PC-9 (cell line): ENCODE measurements at regions of chr7 and their contacts with region 1.

Region 1: GRCh38 chr7:130356121-130356875 is 11.7 kb downstream of the CPA5 start:
- DNase-seq: peak; percentile 93 to 99
- H3K4me3 ChIP-seq: peak overlapping the region; percentile 21; the same call in 1 of the 2 replicates
- H3K27ac ChIP-seq: peak overlapping the region; percentile 75
- H3K4me1 ChIP-seq: peaks cover 69% of the 10 kb centered on the region
- H3K27me3 ChIP-seq: no peaks in the 10 kb centered on the region
- CTCF ChIP-seq: no peak

Region 2: GRCh38 chr7:129864042-129864441 is 492.3 kb before region 1 on chr7:
- CTCF ChIA-PET with region 1: no interaction called
- POLR2A ChIA-PET with region 1: no interaction called
- intact Hi-C with region 1: no loop called
- DNase-seq: no peak
- H3K4me3 ChIP-seq: no peak overlapping the region
- H3K27ac ChIP-seq: peak overlapping the region; percentile 96
- H3K4me1 ChIP-seq: peaks cover 70% of the 10 kb centered on the region
- H3K27me3 ChIP-seq: no peaks in the 10 kb centered on the region
- CTCF ChIP-seq: no peak

Region 3: GRCh38 chr7:130205084-130205947 is 151.0 kb before region 1 on chr7 and contains the start of gene TMEM209:
- CTCF ChIA-PET with region 1: no interaction called
- POLR2A ChIA-PET with region 1: no interaction called
- intact Hi-C with region 1: loop called (anchors 2 kb)
- DNase-seq: peak; percentile 95 to 98
- H3K4me3 ChIP-seq: peak within 1 kb of the TSS; percentile 63
- H3K27ac ChIP-seq: peak within 1 kb of the TSS; percentile 84
- H3K4me1 ChIP-seq: peaks cover 23% of the 10 kb centered on the region
- H3K27me3 ChIP-seq: no peaks in the 10 kb centered on the region
- CTCF ChIP-seq: no peak
- total RNA-seq, gene TMEM209: 20.0 and 30.8 TPM in 2 replicates

Region 4: DNA sequence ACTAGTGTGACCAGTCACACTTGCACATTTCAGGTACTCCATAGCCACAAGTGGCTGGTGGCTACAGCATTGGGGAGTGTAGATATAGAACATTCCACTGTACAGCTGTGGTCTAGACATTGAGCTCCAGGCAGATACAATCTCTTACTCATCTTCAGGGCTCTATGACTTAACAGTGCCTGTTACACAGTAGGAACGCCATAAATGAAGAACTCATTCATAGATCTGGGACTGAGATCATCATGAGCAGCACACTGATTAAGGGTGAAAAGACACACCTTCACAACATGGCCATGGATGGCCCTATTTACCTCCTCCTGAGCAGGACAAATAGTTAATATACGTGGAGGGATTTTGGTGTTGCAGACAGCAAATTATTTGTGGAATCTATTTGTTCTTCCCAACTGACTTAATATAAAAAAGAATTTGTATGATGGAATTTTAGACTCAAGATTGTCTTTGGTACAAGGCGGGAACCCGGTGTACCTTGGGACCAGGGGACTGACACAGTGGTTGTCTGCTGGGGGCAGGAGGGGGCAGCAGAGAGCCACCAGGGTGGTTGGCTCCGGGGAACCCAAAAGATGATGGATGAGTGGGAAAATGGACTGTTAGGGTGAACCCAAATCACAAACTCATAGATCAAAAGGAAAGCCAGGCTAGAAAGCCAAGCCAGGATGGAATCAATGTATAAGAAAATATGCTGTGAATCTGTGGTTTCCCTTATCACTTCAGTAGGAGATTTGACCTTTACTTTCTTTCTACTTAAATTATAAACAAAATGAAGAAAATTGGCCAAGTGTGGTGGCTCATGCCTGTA is 113.9 kb before region 1 on chr7:
- CTCF ChIA-PET with region 1: no interaction called
- POLR2A ChIA-PET with region 1: no interaction called
- intact Hi-C with region 1: loop called (anchors 1 kb)
- DNase-seq: peak; percentile 38 to 48
- H3K4me3 ChIP-seq: no peak overlapping the region
- H3K27ac ChIP-seq: no peak overlapping the region
- H3K4me1 ChIP-seq: no peaks in the 10 kb centered on the region
- H3K27me3 ChIP-seq: no peaks in the 10 kb centered on the region
- CTCF ChIP-seq: peak; percentile 95

Region 5: DNA sequence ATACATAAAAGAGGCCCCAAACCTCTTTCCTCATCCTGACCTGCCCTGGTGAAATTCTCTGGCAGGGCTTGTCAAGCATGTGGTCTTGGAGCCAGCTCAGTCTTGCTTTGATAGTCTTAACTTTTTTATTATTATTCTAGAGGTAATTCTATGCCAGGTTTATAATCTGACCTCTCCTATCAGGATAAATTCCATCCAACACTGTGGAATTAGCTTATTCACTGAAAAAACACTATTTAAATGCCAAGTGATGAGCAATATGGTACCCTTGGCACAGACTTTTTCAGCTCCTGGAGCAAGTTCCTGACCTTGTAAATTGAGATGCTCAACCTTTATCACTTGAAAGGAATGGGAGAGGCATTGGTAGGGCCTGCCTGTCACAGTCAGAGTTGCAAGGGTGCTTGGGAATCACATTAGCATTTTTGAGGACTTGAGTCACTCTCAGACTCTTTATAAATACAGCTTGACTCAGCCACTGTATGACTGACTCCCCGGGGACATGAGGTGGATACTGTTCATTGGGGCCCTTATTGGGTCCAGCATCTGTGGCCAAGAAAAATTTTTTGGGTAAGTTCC is 63.5 kb before region 1 on chr7 and contains the start of gene CPA4:
- CTCF ChIA-PET with region 1: no interaction called
- POLR2A ChIA-PET with region 1: interaction called, 3 read pairs
- intact Hi-C with region 1: loop called (anchors 1 kb)
- DNase-seq: peak; percentile 64 to 98
- H3K4me3 ChIP-seq: peak within 1 kb of the TSS; percentile 25; the same call in 1 of the 2 replicates
- H3K27ac ChIP-seq: peak within 1 kb of the TSS; percentile 42
- H3K4me1 ChIP-seq: peaks cover 52% of the 10 kb centered on the region
- H3K27me3 ChIP-seq: no peaks in the 10 kb centered on the region
- CTCF ChIP-seq: no peak
- total RNA-seq, gene CPA4: 4.2 and 9.8 TPM in 2 replicates

Region 6: GRCh38 chr7:130322587-130322986 is 33.7 kb before region 1 on chr7:
- CTCF ChIA-PET with region 1: no interaction called
- POLR2A ChIA-PET with region 1: no interaction called
- intact Hi-C with region 1: loop called (anchors 2 kb)
- DNase-seq: peak; percentile 69 to 70
- H3K4me3 ChIP-seq: no peak overlapping the region
- H3K27ac ChIP-seq: no peak overlapping the region
- H3K4me1 ChIP-seq: 0 out of 2 replicates have a peak, but pooled peaks cover 5% of the 10 kb centered on the region
- H3K27me3 ChIP-seq: no peaks in the 10 kb centered on the region
- CTCF ChIP-seq: no peak

Region 7: GRCh38 chr7:130419658-130420057 is 63.4 kb after region 1 on chr7:
- CTCF ChIA-PET with region 1: no interaction called
- POLR2A ChIA-PET with region 1: interaction called, 5 read pairs
- intact Hi-C with region 1: loop called (anchors 1 kb)
- DNase-seq: no peak
- H3K4me3 ChIP-seq: no peak overlapping the region
- H3K27ac ChIP-seq: no peak overlapping the region
- H3K4me1 ChIP-seq: no peaks in the 10 kb centered on the region; the same call in 1 of the 2 replicates
- H3K27me3 ChIP-seq: no peaks in the 10 kb centered on the region
- CTCF ChIP-seq: no peak

Region 8: DNA sequence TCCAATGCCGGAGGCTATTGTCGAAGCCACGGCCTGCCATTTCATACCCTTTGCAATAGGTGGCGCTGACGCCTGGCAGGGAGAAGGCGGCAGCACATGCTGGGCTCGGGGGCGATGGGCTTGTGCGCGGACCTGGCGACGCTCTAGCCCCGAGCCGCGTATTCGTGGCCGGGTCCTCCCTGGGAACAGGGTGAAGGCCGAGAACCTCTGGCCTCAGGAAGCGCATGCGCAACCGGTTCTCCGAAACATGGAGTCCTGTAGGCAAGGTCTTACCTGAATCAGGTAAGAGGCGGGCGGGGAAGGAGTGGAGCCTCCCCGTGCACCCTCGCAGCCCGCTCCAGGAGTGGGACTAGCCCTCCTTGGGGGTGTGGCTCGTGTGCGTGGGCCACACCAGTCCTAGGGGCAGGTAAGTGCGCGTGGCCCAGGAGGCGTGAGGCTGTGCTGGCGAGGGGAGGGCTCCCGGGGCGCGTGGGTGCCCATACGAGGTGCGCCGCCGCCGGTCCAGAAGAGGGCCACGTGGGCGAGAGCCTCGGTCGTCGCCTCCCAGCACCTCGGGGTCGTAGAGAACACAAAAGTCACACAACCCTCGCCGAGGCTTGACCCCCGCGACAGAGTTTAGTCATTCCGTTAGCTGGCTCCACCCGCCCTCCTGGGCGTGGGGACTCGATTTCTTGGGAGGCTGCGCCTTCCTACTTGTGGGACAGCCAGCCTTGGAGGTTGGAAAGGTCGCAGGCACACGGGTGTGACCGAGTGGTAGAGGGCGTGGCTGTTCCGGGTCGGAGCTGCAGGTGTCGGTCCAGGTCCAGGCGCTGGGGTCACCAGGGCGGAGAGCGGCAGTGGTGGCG is 130.0 kb after region 1 on chr7:
- CTCF ChIA-PET with region 1: no interaction called
- POLR2A ChIA-PET with region 1: interaction called, 3 read pairs
- intact Hi-C with region 1: loop called (anchors 2 kb)
- DNase-seq: peak; percentile 83 to 86
- H3K4me3 ChIP-seq: peak overlapping the region; percentile 72
- H3K27ac ChIP-seq: peak overlapping the region; percentile 61
- H3K4me1 ChIP-seq: peaks cover 10% of the 10 kb centered on the region; the same call in 1 of the 2 replicates
- H3K27me3 ChIP-seq: no peaks in the 10 kb centered on the region
- CTCF ChIP-seq: peak; percentile 92